ENCODE measurements at regions of chr10 and their contacts with region 1.

Region 1: DNA sequence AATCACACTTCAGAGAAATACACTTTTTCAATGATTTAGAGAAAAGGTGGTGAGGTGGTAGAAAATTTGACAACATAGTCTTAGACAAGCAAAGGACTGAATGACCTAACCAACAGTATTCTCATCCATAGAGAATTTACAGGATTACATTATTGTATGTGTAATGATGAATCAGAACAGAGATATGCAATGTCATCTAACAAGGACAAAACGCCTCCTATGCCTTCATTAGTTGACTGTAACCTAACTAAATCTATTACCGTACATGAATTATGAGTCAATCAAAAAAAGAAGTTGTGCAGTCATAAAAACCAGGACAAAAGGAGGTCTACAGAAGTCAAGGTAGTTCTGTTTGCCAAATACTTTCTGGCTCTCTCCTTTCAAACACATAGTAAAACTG is 66.5 kb downstream of the RAB11FIP2 start:
- DNase-seq: peak; percentile 87
- ATAC-seq: peak; percentile 93
- H3K4me3 ChIP-seq: no peak overlapping the region
- H3K27ac ChIP-seq: peak overlapping the region; percentile 73
- H3K4me1 ChIP-seq: peaks cover 20% of the 10 kb centered on the region
- H3K27me3 ChIP-seq: no peaks in the 10 kb centered on the region
- CTCF ChIP-seq: no peak

Region 2: GRCh38 chr10:117562220-117562619 is 418.0 kb before region 1 on chr10:
- CTCF ChIA-PET with region 1: no interaction called
- POLR2A ChIA-PET with region 1: no interaction called
- intact Hi-C with region 1: no loop called
- DNase-seq: no peak
- ATAC-seq: no peak
- H3K4me3 ChIP-seq: no peak overlapping the region
- H3K27ac ChIP-seq: no peak overlapping the region
- H3K4me1 ChIP-seq: no peaks in the 10 kb centered on the region
- H3K27me3 ChIP-seq: no peaks in the 10 kb centered on the region
- CTCF ChIP-seq: no peak

Region 3: DNA sequence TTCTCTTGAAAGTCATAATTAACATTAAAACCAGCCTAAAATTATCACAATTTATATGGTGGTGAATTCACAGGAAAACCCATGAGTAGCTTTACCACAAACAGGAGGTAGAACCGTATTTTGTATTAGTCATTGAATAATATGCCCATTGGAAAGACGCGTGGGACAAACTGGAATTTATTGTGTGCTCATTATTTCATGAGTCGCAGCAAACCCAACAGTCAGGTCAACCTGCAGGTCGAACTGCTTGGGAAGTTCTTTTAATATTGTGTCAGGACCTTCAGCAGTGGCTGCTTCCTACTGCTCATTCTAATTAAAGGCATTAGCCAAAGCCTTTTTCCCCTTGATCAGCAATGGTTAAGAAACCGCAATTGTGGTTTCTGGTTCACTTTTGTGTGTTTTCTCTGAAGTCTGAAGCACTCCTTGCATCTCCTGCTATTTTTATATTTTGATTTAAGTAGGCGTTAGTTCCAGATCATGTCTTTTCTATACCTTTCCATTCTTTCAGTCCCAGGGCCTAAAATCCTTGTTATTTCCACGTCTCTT is 33.6 kb before region 1 on chr10:
- CTCF ChIA-PET with region 1: no interaction called
- POLR2A ChIA-PET with region 1: no interaction called
- intact Hi-C with region 1: loop called (anchors 1 kb)
- DNase-seq: peak; percentile 76
- ATAC-seq: peak; percentile 67
- H3K4me3 ChIP-seq: no peak overlapping the region
- H3K27ac ChIP-seq: peak overlapping the region; percentile 45
- H3K4me1 ChIP-seq: peaks cover 12% of the 10 kb centered on the region
- H3K27me3 ChIP-seq: no peaks in the 10 kb centered on the region
- CTCF ChIP-seq: no peak

Region 4: DNA sequence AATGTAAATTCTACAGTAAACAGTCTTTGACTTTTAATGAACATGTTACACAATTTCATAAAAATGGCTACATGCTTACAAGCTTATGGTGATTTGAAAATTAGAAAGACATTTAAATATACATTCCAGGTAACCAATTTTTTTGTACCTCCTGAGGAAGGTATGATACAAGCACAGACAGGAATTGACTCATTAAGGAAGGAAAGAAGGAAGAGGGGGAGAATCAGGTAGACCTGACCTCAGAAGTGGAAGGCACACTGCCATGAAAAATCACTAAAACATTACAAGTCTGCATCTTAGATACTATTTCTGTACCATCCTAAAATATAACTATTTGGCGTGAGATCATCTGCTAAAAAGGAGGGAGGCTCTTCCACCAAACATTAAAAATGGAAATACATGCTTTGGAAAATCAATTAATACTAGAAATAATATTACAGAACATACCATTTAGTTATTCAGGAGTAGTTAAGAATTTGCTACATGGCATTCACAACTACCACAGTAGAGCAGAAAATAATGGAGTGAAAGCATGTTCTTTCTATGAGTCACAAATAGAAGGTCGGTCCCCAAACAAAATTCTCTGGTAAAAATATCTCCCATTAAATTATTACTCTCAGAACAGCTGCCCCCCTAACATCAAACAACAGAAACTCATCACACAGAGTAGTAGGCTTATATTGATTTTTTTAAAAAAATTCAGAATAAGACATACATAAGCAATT is 51.3 kb after region 1 on chr10:
- CTCF ChIA-PET with region 1: no interaction called
- POLR2A ChIA-PET with region 1: no interaction called
- intact Hi-C with region 1: loop called (anchors 2 kb)
- DNase-seq: no peak
- ATAC-seq: peak; percentile 15; the same call in 1 of the 2 replicates
- H3K4me3 ChIP-seq: no peak overlapping the region
- H3K27ac ChIP-seq: no peak overlapping the region
- H3K4me1 ChIP-seq: peaks cover 8% of the 10 kb centered on the region; the same call in 1 of the 2 replicates
- H3K27me3 ChIP-seq: no peaks in the 10 kb centered on the region
- CTCF ChIP-seq: no peak

Region 5: DNA sequence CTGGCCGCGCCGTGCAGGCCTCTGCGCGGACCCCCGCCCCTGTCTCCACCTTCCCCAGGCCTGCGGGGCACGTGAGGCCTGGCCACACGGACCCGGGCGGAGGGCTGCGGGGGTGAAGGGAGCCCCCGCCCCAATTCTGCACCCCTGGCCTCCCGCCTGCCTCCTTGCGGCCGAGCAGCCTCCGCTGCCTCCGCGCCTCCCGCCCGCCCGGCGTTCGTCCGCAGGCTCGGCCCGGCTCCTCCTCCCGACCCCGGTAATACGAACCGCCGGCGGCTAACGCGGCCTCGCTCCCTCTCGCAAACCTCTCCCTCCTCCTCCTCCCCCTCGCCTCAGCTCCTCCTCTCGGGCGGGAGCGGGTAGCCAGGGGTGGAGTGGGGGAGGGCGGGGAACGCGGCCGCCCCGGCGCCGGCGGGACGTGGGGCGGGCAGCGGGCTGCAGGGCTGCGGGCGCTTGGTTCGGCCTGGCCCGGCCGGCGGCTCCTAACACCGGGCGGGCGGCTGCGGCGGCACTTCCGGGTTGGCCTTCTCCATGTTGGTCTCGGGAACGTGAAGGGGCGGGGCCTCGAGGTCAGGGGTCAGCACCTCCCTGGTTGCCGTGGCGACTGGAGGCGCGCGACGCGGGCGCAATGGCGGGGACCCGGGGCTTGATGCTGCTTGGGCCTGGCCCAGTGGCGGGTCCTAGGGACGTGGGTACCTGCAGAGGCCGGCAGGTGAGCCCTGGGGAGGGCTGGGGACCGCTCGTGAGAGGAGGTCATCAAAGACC is 66.4 kb after region 1 on chr10 and contains the start of gene RAB11FIP2:
- CTCF ChIA-PET with region 1: no interaction called
- POLR2A ChIA-PET with region 1: no interaction called
- intact Hi-C with region 1: loop called (anchors 2 kb)
- DNase-seq: peak; percentile 75
- ATAC-seq: peak; percentile 80
- H3K4me3 ChIP-seq: peak within 1 kb of the TSS; percentile 85
- H3K27ac ChIP-seq: peak within 1 kb of the TSS; percentile 75
- H3K4me1 ChIP-seq: peaks cover 32% of the 10 kb centered on the region
- H3K27me3 ChIP-seq: no peaks in the 10 kb centered on the region
- CTCF ChIP-seq: no peak
- total RNA-seq, gene RAB11FIP2: 4.4 and 8.2 TPM in 2 replicates